Left cardiac atrium (tissue), 4 donors: ENCODE measurements at regions of chr12 and their contacts with region 1.

Region 1: GRCh38 chr12:2739817-2740641 is 54.7 kb upstream of the FKBP4 start:
- DNase-seq: no peak
- ATAC-seq: peak; percentile 19 to 34

Region 2: DNA sequence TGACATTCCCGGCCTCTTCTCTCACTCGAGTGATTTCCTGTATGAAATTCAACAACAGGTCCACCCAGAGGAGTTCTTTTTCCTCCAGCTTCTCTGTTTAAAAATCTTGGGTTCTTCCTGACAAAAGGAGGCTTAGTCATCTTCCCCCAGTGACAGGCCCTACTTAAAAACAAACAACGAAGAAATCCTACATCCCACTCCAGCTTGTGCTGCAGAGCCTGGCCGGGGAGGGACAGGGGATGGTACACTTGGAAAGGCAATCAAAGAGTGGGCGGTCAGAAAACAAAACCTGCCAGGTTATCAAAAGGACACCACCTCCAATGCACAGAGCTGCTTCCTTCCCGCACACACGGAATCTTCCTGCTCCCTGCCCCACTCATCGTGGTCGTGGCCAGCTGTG is 586.0 kb before region 1 on chr12:
- intact Hi-C with region 1: no loop called
- DNase-seq: no peak
- ATAC-seq: peak in 1 of 2 donors; percentile 67

Region 3: GRCh38 chr12:2783936-2784600 is 44.0 kb after region 1 on chr12:
- intact Hi-C with region 1: loop called in 1 of 2 experiments (anchors 2 kb)
- DNase-seq: peak; percentile 68
- ATAC-seq: peak; percentile 97